Activated CD4-positive, alpha-beta T cell treated with anti-CD3 and anti-CD28 coated beads for 36 hours (primary cell): ENCODE measurements at regions of chr2 and their contacts with region 1.

Region 1: GRCh38 chr2:230068016-230068650 is 591 bp downstream of the SLC16A14 start:
- DNase-seq: peak; percentile 77
- ATAC-seq: peak; percentile 57
- H3K4me3 Mint-ChIP-seq: peak overlapping the region; percentile 72
- H3K27ac Mint-ChIP-seq: peak overlapping the region; percentile 79
- H3K4me1 Mint-ChIP-seq: peaks cover 17% of the 10 kb centered on the region
- H3K27me3 Mint-ChIP-seq: peaks cover 12% of the 10 kb centered on the region

Region 2: GRCh38 chr2:229342376-229342775 is 725.8 kb before region 1 on chr2:
- CTCF ChIA-PET with region 1: no interaction called
- POLR2A ChIA-PET with region 1: no interaction called
- intact Hi-C with region 1: no loop called
- DNase-seq: peak; percentile 33
- ATAC-seq: no peak
- H3K4me3 Mint-ChIP-seq: no peak overlapping the region
- H3K27ac Mint-ChIP-seq: no peak overlapping the region
- H3K4me1 Mint-ChIP-seq: no peaks in the 10 kb centered on the region
- H3K27me3 Mint-ChIP-seq: peaks cover 1% of the 10 kb centered on the region

Region 3: GRCh38 chr2:230053753-230054478 is 14.2 kb before region 1 on chr2:
- CTCF ChIA-PET with region 1: interaction called, 19 read pairs
- POLR2A ChIA-PET with region 1: no interaction called
- intact Hi-C with region 1: no loop called
- DNase-seq: peak; percentile 39
- ATAC-seq: peak; percentile 96
- H3K4me3 Mint-ChIP-seq: no peak overlapping the region
- H3K27ac Mint-ChIP-seq: no peak overlapping the region
- H3K4me1 Mint-ChIP-seq: peaks cover 21% of the 10 kb centered on the region
- H3K27me3 Mint-ChIP-seq: no peaks in the 10 kb centered on the region

Region 4: GRCh38 chr2:230160112-230160660 is 92.1 kb after region 1 on chr2:
- CTCF ChIA-PET with region 1: interaction called, 10 read pairs
- POLR2A ChIA-PET with region 1: no interaction called
- intact Hi-C with region 1: loop called (anchors 1 to 5 kb)
- DNase-seq: peak; percentile 72
- ATAC-seq: peak; percentile 59
- H3K4me3 Mint-ChIP-seq: no peak overlapping the region
- H3K27ac Mint-ChIP-seq: no peak overlapping the region
- H3K4me1 Mint-ChIP-seq: peaks cover 8% of the 10 kb centered on the region
- H3K27me3 Mint-ChIP-seq: no peaks in the 10 kb centered on the region